ENCODE measurements at regions of chr6 and their contacts with region 1.

Region 1: DNA sequence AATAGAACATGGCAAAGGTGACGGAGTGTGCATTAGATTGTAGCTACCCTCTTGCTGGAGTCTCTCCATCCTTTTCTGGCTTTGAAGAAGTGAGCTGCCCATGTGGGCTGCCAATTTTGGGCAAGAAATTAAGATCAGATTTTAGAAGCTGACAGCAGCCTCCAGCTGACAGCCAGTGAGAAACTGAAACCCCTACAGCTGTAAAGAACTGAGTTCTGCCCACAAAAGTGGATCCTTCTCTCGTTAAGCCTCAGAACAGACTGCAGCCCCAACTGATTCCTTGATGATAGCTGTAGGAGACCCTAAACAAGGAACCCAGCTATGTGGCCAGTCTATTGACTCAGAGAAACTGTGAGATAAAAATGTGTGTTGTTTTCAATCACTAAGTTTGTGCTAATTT is 134.1 kb downstream of the CD109 start:
- DNase-seq: no peak
- H3K4me3 ChIP-seq: no peak overlapping the region
- H3K27ac ChIP-seq: no peak overlapping the region
- H3K4me1 ChIP-seq: no peaks in the 10 kb centered on the region
- H3K27me3 ChIP-seq: no peaks in the 10 kb centered on the region
- CTCF ChIP-seq: no peak
- POLR2A ChIP-seq: no peak

Region 2: GRCh38 chr6:73520688-73521350 is 309.3 kb before region 1 on chr6 and contains the start of gene EEF1A1:
- intact Hi-C with region 1: no loop called
- DNase-seq: peak; percentile 99
- H3K4me3 ChIP-seq: peak within 1 kb of the TSS; percentile 91 to 98 (median 92)
- H3K27ac ChIP-seq: peak within 1 kb of the TSS; percentile 99 to 100
- H3K4me1 ChIP-seq: no peaks in the 10 kb centered on the region
- H3K27me3 ChIP-seq: no peaks in the 10 kb centered on the region
- CTCF ChIP-seq: peak in 2 of 3 donors; percentile 22 to 39
- POLR2A ChIP-seq: peak; percentile 100
- total RNA-seq, gene EEF1A1: 12,629 to 16,405 (median 13,038) TPM

Region 3: GRCh38 chr6:73665686-73666319 is 164.3 kb before region 1 on chr6:
- intact Hi-C with region 1: no loop called
- DNase-seq: no peak
- H3K4me3 ChIP-seq: no peak overlapping the region
- H3K27ac ChIP-seq: no peak overlapping the region
- H3K4me1 ChIP-seq: no peaks in the 10 kb centered on the region
- H3K27me3 ChIP-seq: no peaks in the 10 kb centered on the region
- CTCF ChIP-seq: no peak
- POLR2A ChIP-seq: no peak

Region 4: DNA sequence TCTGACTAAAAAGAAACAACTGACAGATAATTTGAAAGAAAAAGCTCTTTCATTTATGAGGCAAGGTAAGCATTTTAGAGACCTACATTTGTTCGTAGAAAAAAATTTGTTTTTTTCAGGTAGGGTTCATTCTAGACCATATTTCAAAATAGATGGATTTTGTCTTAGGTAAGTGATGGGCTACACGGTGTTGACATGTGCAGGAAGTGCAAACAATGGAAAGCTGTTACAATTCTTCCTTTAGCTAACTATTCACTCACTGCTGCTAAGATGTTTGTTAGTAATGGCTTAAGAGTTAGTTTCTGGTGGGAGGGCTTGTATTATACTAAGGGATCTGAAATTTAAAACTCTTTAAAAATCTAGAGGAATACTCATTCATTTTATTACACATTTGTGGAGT is 37.4 kb before region 1 on chr6:
- intact Hi-C with region 1: loop called (anchors 2 kb)
- DNase-seq: no peak
- H3K4me3 ChIP-seq: no peak overlapping the region
- H3K27ac ChIP-seq: no peak overlapping the region
- H3K4me1 ChIP-seq: no peaks in the 10 kb centered on the region
- H3K27me3 ChIP-seq: no peaks in the 10 kb centered on the region
- CTCF ChIP-seq: no peak
- POLR2A ChIP-seq: no peak

Region 5: DNA sequence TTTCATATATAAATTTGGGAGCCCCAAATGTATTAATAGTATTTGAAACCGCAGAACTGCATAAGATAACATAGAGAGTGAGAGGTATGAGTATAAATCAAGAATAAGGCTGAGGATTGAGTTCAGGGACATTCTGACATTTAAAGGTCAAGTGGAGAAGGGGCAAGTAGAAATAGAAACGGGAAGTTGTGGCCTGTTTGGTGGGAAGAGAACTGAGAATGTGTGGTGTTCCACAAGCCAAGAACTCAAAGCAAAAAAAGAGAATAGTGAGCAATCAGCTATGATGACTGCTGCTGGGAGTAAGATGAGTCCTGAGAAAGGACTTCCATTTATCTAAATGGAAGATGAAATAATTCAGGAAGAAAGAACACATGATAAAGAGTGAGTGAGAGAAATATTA is 284.3 kb after region 1 on chr6:
- intact Hi-C with region 1: no loop called
- DNase-seq: no peak
- H3K4me3 ChIP-seq: no peak overlapping the region
- H3K27ac ChIP-seq: no peak overlapping the region
- H3K4me1 ChIP-seq: no peaks in the 10 kb centered on the region
- H3K27me3 ChIP-seq: no peaks in the 10 kb centered on the region
- CTCF ChIP-seq: no peak
- POLR2A ChIP-seq: no peak

Measured in breast epithelium (tissue), 4 donors.